Esophagus muscularis mucosa (tissue), 4 donors: ENCODE measurements at regions of chr14 and their contacts with region 1.

Region 1: GRCh38 chr14:21455911-21456667 is at the start of gene CHD8:
- DNase-seq: peak; percentile 100
- H3K4me3 ChIP-seq: peak within 1 kb of the TSS; percentile 68 to 97 (median 76)
- H3K27ac ChIP-seq: peak within 1 kb of the TSS; percentile 88 to 94 (median 92)
- H3K4me1 ChIP-seq: peaks cover 24 to 42% (median 34%) of the 10 kb centered on the region in 4 donors
- H3K27me3 ChIP-seq: no peaks in the 10 kb centered on the region
- CTCF ChIP-seq: peak; percentile 46 to 70 (median 50)
- EP300 ChIP-seq: peak; percentile 40
- POLR2A ChIP-seq: no peak
- total RNA-seq, gene CHD8: 45.6 to 64.3 (median 55.0) TPM

Region 2: GRCh38 chr14:21437063-21437901 is 18.8 kb before region 1 on chr14:
- intact Hi-C with region 1: loop called (anchors 2 kb)
- DNase-seq: peak; percentile 99
- H3K4me3 ChIP-seq: peak overlapping the region; percentile 86 to 95 (median 88)
- H3K27ac ChIP-seq: peak overlapping the region; percentile 84 to 90 (median 88)
- H3K4me1 ChIP-seq: peaks cover 12 to 33% (median 27%) of the 10 kb centered on the region in 4 donors
- H3K27me3 ChIP-seq: no peaks in the 10 kb centered on the region
- CTCF ChIP-seq: no peak
- EP300 ChIP-seq: no peak
- POLR2A ChIP-seq: no peak

Region 3: GRCh38 chr14:21557084-21557901 is 101.2 kb after region 1 on chr14:
- intact Hi-C with region 1: loop called (anchors 2 kb)
- DNase-seq: peak; percentile 95
- H3K4me3 ChIP-seq: peak overlapping the region; percentile 37 to 48 (median 41)
- H3K27ac ChIP-seq: peak overlapping the region; percentile 70 to 77 (median 74)
- H3K4me1 ChIP-seq: peaks cover 0 to 19% (median 15%) of the 10 kb centered on the region in 4 donors
- H3K27me3 ChIP-seq: no peaks in the 10 kb centered on the region
- CTCF ChIP-seq: peak; percentile 65 to 79 (median 65)
- EP300 ChIP-seq: no peak
- POLR2A ChIP-seq: no peak